Ascending aorta (tissue), 2 donors: ENCODE measurements at regions of chr4 and their contacts with region 1.

Region 1: DNA sequence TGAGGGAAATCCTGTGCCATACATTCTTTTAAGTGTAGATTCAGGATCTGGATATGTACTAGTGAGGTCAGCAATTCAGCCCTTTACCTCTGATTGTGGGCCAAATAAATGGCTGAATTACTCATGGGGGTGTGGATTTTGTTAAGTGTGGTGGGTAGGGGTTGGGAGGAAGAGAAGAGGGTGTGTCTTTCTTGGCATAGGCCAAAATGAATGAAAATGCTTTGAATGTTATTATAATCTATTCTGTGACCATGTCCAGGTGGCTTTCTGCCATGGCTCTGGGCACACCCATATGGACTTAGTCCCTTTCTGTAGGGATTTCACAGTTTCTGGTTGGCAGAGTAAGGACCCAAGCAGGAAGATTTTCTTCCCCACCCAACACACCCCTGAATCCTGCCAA is 244.3 kb downstream of the CBR4 start:
- DNase-seq: peak in 1 of 2 donors; percentile 82
- H3K4me3 ChIP-seq: no peak overlapping the region
- H3K27ac ChIP-seq: peak overlapping the region; percentile 82 to 90
- H3K4me1 ChIP-seq: peaks cover 0 to 46% of the 10 kb centered on the region in 2 donors
- H3K27me3 ChIP-seq: no peaks in the 10 kb centered on the region
- CTCF ChIP-seq: no peak

Region 2: DNA sequence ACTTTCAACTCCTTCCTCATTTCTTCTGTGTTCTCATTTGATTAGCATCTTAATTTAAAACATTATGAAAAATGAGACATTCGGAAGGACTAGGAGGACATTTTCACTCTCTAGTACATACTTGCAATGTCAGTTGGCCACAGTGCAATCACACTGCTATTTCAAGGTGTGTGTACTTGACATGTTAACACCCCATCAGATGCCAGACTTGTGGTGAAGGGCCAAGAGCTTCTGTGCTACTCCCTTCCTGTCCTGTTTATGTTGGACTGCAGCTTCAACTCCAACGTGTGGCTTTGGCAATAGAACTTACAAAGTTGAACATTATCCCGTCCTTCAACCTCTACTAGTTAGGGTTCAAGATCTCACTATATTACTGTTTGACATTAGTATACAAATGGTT is 47.9 kb before region 1 on chr4:
- intact Hi-C with region 1: loop called (anchors 5 kb)
- DNase-seq: no peak
- H3K4me3 ChIP-seq: no peak overlapping the region
- H3K27ac ChIP-seq: peak overlapping the region; percentile 85 to 87
- H3K4me1 ChIP-seq: peaks cover 5 to 19% of the 10 kb centered on the region in 2 donors
- H3K27me3 ChIP-seq: no peaks in the 10 kb centered on the region
- CTCF ChIP-seq: no peak

Region 3: GRCh38 chr4:169286562-169287301 is 521.0 kb after region 1 on chr4:
- intact Hi-C with region 1: no loop called
- DNase-seq: no peak
- H3K4me3 ChIP-seq: no peak overlapping the region
- H3K27ac ChIP-seq: no peak overlapping the region
- H3K4me1 ChIP-seq: peaks cover 0 to 2% of the 10 kb centered on the region in 2 donors
- H3K27me3 ChIP-seq: no peaks in the 10 kb centered on the region
- CTCF ChIP-seq: no peak